ENCODE measurements at regions of chr2 and their contacts with region 1.

Region 1: DNA sequence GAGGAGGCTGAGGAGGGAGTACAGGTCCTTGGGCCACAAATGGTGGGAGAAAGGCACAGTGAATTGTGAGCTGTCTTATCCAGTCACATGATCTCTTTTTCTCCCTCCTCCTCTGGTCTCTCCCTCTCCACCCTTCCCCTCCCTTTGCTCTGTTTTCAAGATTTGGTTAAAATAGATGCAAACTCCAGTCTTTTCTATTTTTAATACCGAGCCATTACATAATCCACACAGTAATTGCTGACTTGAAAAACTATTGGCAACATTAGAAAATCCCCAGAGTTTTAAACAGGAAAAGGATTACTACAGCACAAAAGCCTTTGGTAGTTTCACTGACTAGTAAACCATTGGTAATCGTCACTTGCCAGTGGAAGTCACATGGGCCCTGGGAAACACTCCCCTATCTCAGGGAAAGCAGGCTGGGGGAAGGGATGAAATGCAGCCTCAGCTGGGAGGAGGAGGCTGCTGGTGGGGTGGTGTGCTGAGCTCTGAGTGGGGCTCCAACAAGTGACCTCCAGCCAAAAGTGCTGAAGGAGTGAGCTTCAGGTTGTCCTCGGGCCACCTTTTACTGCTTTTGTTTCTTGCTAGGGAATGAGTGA is 57.4 kb upstream of the PCBP1 start:
- DNase-seq: peak; percentile 84
- ATAC-seq: peak; percentile 94

Region 2: GRCh38 chr2:69589973-69590652 is 439.8 kb before region 1 on chr2:
- intact Hi-C with region 1: no loop called
- DNase-seq: no peak
- ATAC-seq: peak; percentile 82

Region 3: GRCh38 chr2:69753659-69754363 is 276.1 kb before region 1 on chr2:
- intact Hi-C with region 1: no loop called
- DNase-seq: no peak
- ATAC-seq: no peak

Region 4: DNA sequence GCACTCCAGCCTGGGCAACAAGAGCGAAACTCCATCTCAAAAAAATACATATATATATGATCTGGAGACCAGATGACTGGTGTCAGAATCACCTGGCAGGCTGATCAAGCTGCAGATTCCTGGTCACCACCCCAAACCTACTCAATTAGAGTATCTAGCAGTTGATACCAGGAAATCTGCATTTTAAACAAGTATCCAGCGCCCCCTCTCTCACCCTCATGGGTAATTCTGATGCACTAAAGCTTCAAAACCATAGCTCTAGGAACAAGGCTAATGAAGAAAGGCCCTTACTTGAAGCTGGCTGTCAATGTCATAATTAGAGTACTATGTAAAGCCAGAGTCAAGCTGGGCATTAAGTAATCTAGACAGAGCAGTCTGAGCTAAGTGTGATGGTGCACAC is 32.4 kb after region 1 on chr2:
- intact Hi-C with region 1: loop called (anchors 5 kb)
- DNase-seq: no peak
- ATAC-seq: no peak

Region 5: GRCh38 chr2:70104231-70105111 is 74.6 kb after region 1 on chr2:
- intact Hi-C with region 1: no loop called
- DNase-seq: no peak
- ATAC-seq: no peak